Naive thymus-derived CD4-positive, alpha-beta T cell (primary cell): ENCODE measurements at regions of chr2 and their contacts with region 1.

Region 1: GRCh38 chr2:27079233-27080139 is 1.1 kb downstream of the EMILIN1 start:
- DNase-seq: no peak
- ATAC-seq: no peak
- H3K4me3 ChIP-seq: no peak overlapping the region
- H3K4me3 Mint-ChIP-seq: no peak overlapping the region
- H3K27ac ChIP-seq: no peak overlapping the region
- H3K27ac Mint-ChIP-seq: peak overlapping the region in 4 of 9 donors; percentile 79 to 97 (median 96)
- H3K4me1 ChIP-seq: peaks cover 18 to 32% of the 10 kb centered on the region in 2 donors
- H3K4me1 Mint-ChIP-seq: peaks cover 27 to 53% (median 45%) of the 10 kb centered on the region in 7 donors
- H3K27me3 ChIP-seq: no peaks in the 10 kb centered on the region
- H3K27me3 Mint-ChIP-seq: no peaks in the 10 kb centered on the region

Region 2: GRCh38 chr2:26959331-26959730 is 120.2 kb before region 1 on chr2:
- CTCF ChIA-PET with region 1: interaction called, 4 read pairs
- POLR2A ChIA-PET with region 1: no interaction called
- intact Hi-C with region 1: loop called in 1 of 2 experiments (anchors 2 kb)
- DNase-seq: no peak
- ATAC-seq: no peak
- H3K4me3 ChIP-seq: no peak overlapping the region
- H3K4me3 Mint-ChIP-seq: no peak overlapping the region
- H3K27ac ChIP-seq: no peak overlapping the region
- H3K27ac Mint-ChIP-seq: peak overlapping the region in 1 of 9 donors; percentile 14
- H3K4me1 ChIP-seq: no peaks in the 10 kb centered on the region
- H3K4me1 Mint-ChIP-seq: peaks cover 0 to 8% (median 0%) of the 10 kb centered on the region in 7 donors
- H3K27me3 ChIP-seq: no peaks in the 10 kb centered on the region
- H3K27me3 Mint-ChIP-seq: peaks cover 9 to 52% (median 35%) of the 10 kb centered on the region in 5 donors

Region 3: DNA sequence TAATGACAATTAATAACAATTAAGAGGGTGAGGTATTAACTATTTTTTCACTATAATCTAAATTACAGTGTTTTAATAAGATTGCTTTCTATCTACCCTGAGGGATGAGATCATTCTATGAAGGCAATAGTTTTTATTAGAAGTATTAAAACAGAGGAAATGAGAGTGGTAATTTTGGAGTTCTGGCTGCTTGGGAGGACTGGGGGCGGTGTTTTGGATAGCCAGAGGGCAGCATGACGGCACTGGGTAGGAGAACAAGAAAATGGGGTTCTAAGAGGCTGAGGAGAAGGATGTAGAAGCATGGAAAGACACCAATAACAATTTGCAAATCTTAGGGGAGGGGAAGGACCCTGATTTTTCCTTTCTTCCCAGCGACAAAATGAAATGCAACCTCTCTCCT is 190.6 kb after region 1 on chr2:
- CTCF ChIA-PET with region 1: no interaction called
- POLR2A ChIA-PET with region 1: no interaction called
- intact Hi-C with region 1: no loop called
- DNase-seq: no peak
- ATAC-seq: no peak
- H3K4me3 ChIP-seq: no peak overlapping the region
- H3K4me3 Mint-ChIP-seq: no peak overlapping the region
- H3K27ac ChIP-seq: no peak overlapping the region
- H3K27ac Mint-ChIP-seq: no peak overlapping the region
- H3K4me1 ChIP-seq: no peaks in the 10 kb centered on the region
- H3K4me1 Mint-ChIP-seq: peaks cover 0 to 7% (median 4%) of the 10 kb centered on the region in 7 donors
- H3K27me3 ChIP-seq: peaks cover 5 to 6% of the 10 kb centered on the region in 2 donors
- H3K27me3 Mint-ChIP-seq: peaks cover 9 to 24% (median 16%) of the 10 kb centered on the region in 5 donors